RWPE1 (cell line): ENCODE measurements at regions of chr15 and their contacts with region 1.

Region 1: GRCh38 chr15:51162865-51163762 is 68.4 kb upstream of the TNFAIP8L3 start:
- DNase-seq: peak; percentile 90
- H3K27ac ChIP-seq: no peak overlapping the region
- CTCF ChIP-seq: peak; percentile 100

Region 2: DNA sequence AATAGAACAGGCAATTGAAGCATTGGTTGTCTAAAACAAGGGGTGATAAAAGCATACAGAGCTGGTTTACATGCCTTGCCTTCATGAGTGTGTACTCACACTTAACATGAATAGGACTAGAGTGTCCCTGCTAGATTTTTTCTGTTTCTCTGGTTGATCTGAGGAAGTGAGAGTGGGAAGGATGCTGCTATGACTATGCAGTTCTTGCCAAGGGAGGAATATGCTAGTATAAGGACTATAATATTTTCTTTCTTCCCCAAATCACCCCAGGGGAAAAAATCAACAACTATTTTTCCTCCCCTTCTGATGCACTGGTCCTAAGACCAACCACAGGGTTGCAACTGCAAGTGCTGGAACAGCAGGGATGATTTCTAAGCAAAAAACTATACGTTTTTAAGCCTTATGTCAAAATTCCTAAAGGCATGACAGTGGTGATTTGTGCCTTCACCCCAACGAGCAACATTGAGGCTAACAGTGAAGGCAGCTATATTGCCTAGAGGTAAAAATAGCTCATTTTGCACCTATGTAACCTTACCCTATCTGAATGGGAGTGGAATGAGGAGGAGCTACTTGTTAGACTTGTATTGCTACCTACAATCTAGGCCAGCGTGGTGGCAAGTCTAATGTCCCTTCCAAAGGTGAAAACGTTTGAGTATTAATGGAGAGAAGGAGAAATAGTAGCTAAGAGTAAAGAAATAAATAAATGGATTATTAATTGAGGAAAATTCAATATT is 772.4 kb before region 1 on chr15:
- CTCF ChIA-PET with region 1: no interaction called
- POLR2A ChIA-PET with region 1: no interaction called
- DNase-seq: no peak
- H3K27ac ChIP-seq: no peak overlapping the region
- CTCF ChIP-seq: no peak

Region 3: GRCh38 chr15:51144021-51144532 is 19.0 kb before region 1 on chr15:
- CTCF ChIA-PET with region 1: interaction called, 13 read pairs
- POLR2A ChIA-PET with region 1: no interaction called
- DNase-seq: peak; percentile 82
- H3K27ac ChIP-seq: peak overlapping the region; percentile 88
- CTCF ChIP-seq: no peak

Region 4: DNA sequence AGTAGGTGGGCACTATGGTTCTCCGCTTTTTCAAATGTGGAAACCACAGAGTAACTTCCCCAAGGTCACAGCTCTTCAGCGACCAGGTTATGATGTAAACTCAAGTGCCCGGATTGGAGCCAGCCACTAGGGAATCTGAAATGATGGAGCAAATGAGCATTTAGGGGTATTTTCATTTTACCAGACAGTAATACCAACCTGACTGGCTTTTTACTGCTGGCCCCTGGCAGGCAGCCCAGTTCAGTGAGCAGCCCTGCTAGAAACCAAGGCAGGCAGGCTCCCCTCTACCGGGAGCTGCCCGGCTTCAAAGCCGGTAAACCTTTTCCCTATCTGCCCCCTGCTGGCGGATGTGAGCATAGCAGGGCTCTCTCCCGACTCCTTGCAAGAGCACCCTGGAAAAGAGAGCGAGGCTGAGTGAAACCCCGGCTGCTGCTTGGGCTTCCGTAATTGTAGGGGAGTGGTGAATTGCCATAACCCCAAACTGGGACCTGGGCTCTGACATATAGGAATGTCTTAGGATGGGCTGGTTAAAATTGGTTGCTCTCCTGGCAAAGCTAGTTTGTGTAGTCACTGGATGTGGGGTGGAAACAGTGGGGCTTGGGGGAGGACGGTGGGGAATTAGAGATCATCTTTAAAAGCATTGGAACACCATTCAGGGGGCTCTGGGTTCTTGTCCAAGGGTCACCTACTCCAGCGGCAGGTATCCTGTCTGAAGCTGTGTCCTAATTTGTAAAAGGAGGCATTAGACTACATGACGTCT is 29.6 kb after region 1 on chr15:
- CTCF ChIA-PET with region 1: interaction called, 60 read pairs
- POLR2A ChIA-PET with region 1: interaction called, 10 read pairs
- DNase-seq: peak; percentile 76
- H3K27ac ChIP-seq: no peak overlapping the region
- CTCF ChIP-seq: peak; percentile 97

Region 5: GRCh38 chr15:51380999-51381795 is 218.1 kb after region 1 on chr15:
- CTCF ChIA-PET with region 1: interaction called, 25 read pairs
- POLR2A ChIA-PET with region 1: no interaction called
- DNase-seq: peak; percentile 87
- H3K27ac ChIP-seq: no peak overlapping the region
- CTCF ChIP-seq: peak; percentile 93